ENCODE measurements at regions of chr22 and their contacts with region 1.

Region 1: GRCh38 chr22:23767673-23768548 is at the start of gene CHCHD10:
- DNase-seq: peak; percentile 88 to 90
- ATAC-seq: peak; percentile 74 to 82
- H3K4me3 ChIP-seq: peak within 1 kb of the TSS; percentile 78 to 94 (median 90)
- H3K27ac ChIP-seq: peak within 1 kb of the TSS; percentile 96 to 100 (median 100)
- H3K4me1 ChIP-seq: peaks cover 28 to 39% of the 10 kb centered on the region in 2 donors
- H3K27me3 ChIP-seq: no peaks in the 10 kb centered on the region
- CTCF ChIP-seq: peak; percentile 84 to 96 (median 93)
- POLR2A ChIP-seq: peak; percentile 98
- total RNA-seq, gene CHCHD10: 157 to 290 (median 181) TPM

Region 2: GRCh38 chr22:23431337-23432072 is 336.4 kb before region 1 on chr22:
- in situ Hi-C with region 1: no loop called
- intact Hi-C with region 1: no loop called
- DNase-seq: peak in 1 of 2 donors; percentile 57
- ATAC-seq: peak in 1 of 2 donors; percentile 94
- H3K4me3 ChIP-seq: no peak overlapping the region
- H3K27ac ChIP-seq: no peak overlapping the region
- H3K4me1 ChIP-seq: no peaks in the 10 kb centered on the region
- H3K27me3 ChIP-seq: peaks cover 13 to 24% (median 23%) of the 10 kb centered on the region in 3 donors
- CTCF ChIP-seq: no peak
- POLR2A ChIP-seq: no peak

Region 3: DNA sequence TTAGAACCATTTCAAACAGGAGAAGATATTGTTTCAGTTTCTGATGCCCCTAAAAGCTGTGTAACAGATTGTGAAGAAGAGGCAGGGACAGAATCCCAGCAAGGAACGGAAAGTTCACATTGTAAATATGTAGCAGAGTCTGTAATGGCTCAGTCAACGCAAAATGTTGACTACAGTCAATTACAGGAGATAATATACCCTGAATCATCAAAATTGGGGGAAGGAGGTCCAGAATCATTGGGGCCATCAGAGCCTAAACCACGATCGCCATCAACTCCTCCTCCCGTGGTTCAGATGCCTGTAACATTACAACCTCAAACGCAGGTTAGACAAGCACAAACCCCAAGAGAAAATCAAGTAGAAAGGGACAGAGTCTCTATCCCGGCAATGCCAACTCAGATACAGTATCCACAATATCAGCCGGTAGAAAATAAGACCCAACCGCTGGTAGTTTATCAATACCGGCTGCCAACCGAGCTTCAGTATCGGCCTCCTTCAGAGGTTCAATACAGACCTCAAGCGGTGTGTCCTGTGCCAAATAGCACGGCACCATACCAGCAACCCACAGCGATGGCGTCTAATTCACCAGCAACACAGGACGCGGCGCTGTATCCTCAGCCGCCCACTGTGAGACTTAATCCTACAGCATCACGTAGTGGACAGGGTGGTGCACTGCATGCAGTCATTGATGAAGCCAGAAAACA is 228.6 kb before region 1 on chr22:
- in situ Hi-C with region 1: no loop called
- intact Hi-C with region 1: loop called (anchors 5 kb)
- DNase-seq: peak; percentile 45 to 61
- ATAC-seq: peak; percentile 92 to 98
- H3K4me3 ChIP-seq: no peak overlapping the region
- H3K27ac ChIP-seq: no peak overlapping the region
- H3K4me1 ChIP-seq: peaks cover 0 to 9% of the 10 kb centered on the region in 2 donors
- H3K27me3 ChIP-seq: no peaks in the 10 kb centered on the region
- CTCF ChIP-seq: peak; percentile 75 to 86 (median 80)
- POLR2A ChIP-seq: no peak

Region 4: DNA sequence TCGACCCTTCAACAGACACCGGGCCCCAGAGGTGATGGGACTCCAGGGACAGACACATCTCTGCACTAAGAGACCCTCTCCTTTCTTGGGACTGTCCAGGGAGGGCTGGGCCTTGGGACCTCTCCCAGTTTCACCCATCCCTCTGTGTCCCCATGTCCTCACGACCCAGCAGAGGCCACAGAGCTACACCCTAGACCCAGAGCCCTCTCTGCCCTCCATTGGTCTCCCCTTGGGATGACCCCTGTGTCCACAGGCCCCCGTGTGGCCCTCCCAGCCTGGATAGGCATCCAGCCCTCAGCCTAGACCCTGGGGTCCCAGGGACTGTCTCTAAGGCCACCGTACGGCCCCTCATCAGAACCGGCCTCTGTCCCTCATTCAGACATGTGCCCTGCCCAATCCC is 128.2 kb before region 1 on chr22:
- in situ Hi-C with region 1: no loop called
- intact Hi-C with region 1: no loop called
- DNase-seq: no peak
- ATAC-seq: no peak
- H3K4me3 ChIP-seq: no peak overlapping the region
- H3K27ac ChIP-seq: no peak overlapping the region
- H3K4me1 ChIP-seq: no peaks in the 10 kb centered on the region
- H3K27me3 ChIP-seq: no peaks in the 10 kb centered on the region
- CTCF ChIP-seq: no peak
- POLR2A ChIP-seq: no peak

Region 5: GRCh38 chr22:23685205-23685784 is 82.6 kb before region 1 on chr22:
- in situ Hi-C with region 1: no loop called
- intact Hi-C with region 1: loop called (anchors 5 kb)
- DNase-seq: peak; percentile 37 to 78
- ATAC-seq: peak; percentile 65 to 73
- H3K4me3 ChIP-seq: no peak overlapping the region
- H3K27ac ChIP-seq: peak overlapping the region; percentile 85 to 90 (median 86)
- H3K4me1 ChIP-seq: peaks cover 37 to 57% of the 10 kb centered on the region in 2 donors
- H3K27me3 ChIP-seq: no peaks in the 10 kb centered on the region
- CTCF ChIP-seq: no peak
- POLR2A ChIP-seq: no peak

Region 6: DNA sequence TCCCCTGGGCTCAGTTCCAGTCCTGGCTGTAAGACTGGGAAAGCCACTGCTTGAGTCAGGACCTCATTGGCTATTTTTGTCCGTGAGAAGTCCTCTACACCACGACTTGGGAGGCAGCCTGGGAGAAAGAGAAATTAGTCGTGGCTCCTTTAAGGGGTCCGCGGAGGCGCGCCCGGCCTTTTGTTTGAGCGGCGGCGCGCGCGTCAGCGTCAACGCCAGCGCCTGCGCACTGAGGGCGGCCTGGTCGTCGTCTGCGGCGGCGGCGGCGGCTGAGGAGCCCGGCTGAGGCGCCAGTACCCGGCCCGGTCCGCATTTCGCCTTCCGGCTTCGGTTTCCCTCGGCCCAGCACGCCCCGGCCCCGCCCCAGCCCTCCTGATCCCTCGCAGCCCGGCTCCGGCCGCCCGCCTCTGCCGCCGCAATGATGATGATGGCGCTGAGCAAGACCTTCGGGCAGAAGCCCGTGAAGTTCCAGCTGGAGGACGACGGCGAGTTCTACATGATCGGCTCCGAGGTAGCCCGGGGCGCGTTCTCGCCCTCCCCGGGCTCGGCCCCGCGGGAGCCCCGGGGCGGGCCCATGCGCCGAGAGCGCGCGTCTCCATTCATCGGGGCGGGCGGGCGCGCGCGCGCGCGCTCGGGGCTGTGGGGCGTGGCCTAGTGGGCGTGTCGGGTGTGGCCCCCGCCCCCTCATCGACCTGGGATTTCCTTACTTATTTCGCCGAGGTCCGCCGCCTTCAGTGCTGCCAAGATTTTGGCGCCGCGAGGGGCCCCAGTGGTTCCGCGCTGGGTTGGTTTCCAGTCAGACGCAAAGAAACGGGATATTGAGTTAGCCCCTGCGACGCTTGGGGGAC is 19.1 kb after region 1 on chr22 and contains the start of gene SMARCB1:
- in situ Hi-C with region 1: no loop called
- intact Hi-C with region 1: loop called (anchors 2 kb)
- DNase-seq: peak; percentile 90 to 97
- ATAC-seq: peak; percentile 96
- H3K4me3 ChIP-seq: peak within 1 kb of the TSS; percentile 78 to 93 (median 84)
- H3K27ac ChIP-seq: peak within 1 kb of the TSS; percentile 96 to 100 (median 98)
- H3K4me1 ChIP-seq: peaks cover 27 to 34% of the 10 kb centered on the region in 2 donors
- H3K27me3 ChIP-seq: no peaks in the 10 kb centered on the region
- CTCF ChIP-seq: peak in 2 of 5 experiments; percentile 20 to 23
- POLR2A ChIP-seq: peak; percentile 87 to 88
- total RNA-seq, gene SMARCB1: 37.8 to 65.6 (median 55.2) TPM

Region 7: GRCh38 chr22:23893943-23894709 is 126.2 kb after region 1 on chr22 and contains the start of gene MIF:
- in situ Hi-C with region 1: no loop called
- intact Hi-C with region 1: loop called (anchors 5 kb)
- DNase-seq: peak; percentile 78 to 89
- ATAC-seq: peak; percentile 90 to 91
- H3K4me3 ChIP-seq: peak within 1 kb of the TSS; percentile 67 to 94 (median 78)
- H3K27ac ChIP-seq: peak within 1 kb of the TSS; percentile 83 to 95 (median 88)
- H3K4me1 ChIP-seq: peaks cover 12 to 19% of the 10 kb centered on the region in 2 donors
- H3K27me3 ChIP-seq: no peaks in the 10 kb centered on the region
- CTCF ChIP-seq: peak; percentile 65 to 86 (median 76)
- POLR2A ChIP-seq: peak; percentile 88 to 89
- total RNA-seq, gene MIF: 78.1 to 145 (median 129) TPM

Region 8: GRCh38 chr22:23938328-23939016 is 170.6 kb after region 1 on chr22:
- in situ Hi-C with region 1: no loop called
- intact Hi-C with region 1: no loop called
- DNase-seq: no peak
- ATAC-seq: no peak
- H3K4me3 ChIP-seq: no peak overlapping the region
- H3K27ac ChIP-seq: no peak overlapping the region
- H3K4me1 ChIP-seq: no peaks in the 10 kb centered on the region
- H3K27me3 ChIP-seq: no peaks in the 10 kb centered on the region
- CTCF ChIP-seq: no peak
- POLR2A ChIP-seq: no peak

Measured in gastrocnemius medialis (tissue), 4 donors.